Caco-2 (cell line): ENCODE measurements at regions of chr17 and their contacts with region 1.

Region 1: GRCh38 chr17:50139950-50140871 is 10.3 kb upstream of the SAMD14 start:
- DNase-seq: peak; percentile 89 to 93
- H3K4me3 ChIP-seq: no peak overlapping the region
- H3K4me3 Mint-ChIP-seq: no peak overlapping the region
- H3K27ac Mint-ChIP-seq: no peak overlapping the region
- H3K4me1 ChIP-seq: no peaks in the 10 kb centered on the region
- H3K4me1 Mint-ChIP-seq: peaks cover 4% of the 10 kb centered on the region
- H3K27me3 ChIP-seq: no peaks in the 10 kb centered on the region
- H3K27me3 Mint-ChIP-seq: no peaks in the 10 kb centered on the region
- CTCF ChIP-seq: peak; percentile 99 to 100

Region 2: GRCh38 chr17:50018909-50019308 is 121.3 kb before region 1 on chr17:
- CTCF ChIA-PET with region 1: no interaction called
- POLR2A ChIA-PET with region 1: no interaction called
- intact Hi-C with region 1: no loop called
- DNase-seq: no peak
- H3K4me3 ChIP-seq: no peak overlapping the region
- H3K4me3 Mint-ChIP-seq: no peak overlapping the region
- H3K27ac Mint-ChIP-seq: no peak overlapping the region
- H3K4me1 ChIP-seq: no peaks in the 10 kb centered on the region
- H3K4me1 Mint-ChIP-seq: no peaks in the 10 kb centered on the region
- H3K27me3 ChIP-seq: no peaks in the 10 kb centered on the region
- H3K27me3 Mint-ChIP-seq: no peaks in the 10 kb centered on the region
- CTCF ChIP-seq: no peak

Region 3: GRCh38 chr17:50161023-50161910 is 21.1 kb after region 1 on chr17:
- CTCF ChIA-PET with region 1: interaction called, 11 read pairs
- POLR2A ChIA-PET with region 1: no interaction called
- intact Hi-C with region 1: loop called (anchors 1 kb)
- DNase-seq: peak; percentile 96 to 100
- H3K4me3 ChIP-seq: peak overlapping the region; percentile 48
- H3K4me3 Mint-ChIP-seq: peak overlapping the region; percentile 67
- H3K27ac Mint-ChIP-seq: peak overlapping the region; percentile 2
- H3K4me1 ChIP-seq: peaks cover 17% of the 10 kb centered on the region
- H3K4me1 Mint-ChIP-seq: peaks cover 13% of the 10 kb centered on the region
- H3K27me3 ChIP-seq: no peaks in the 10 kb centered on the region
- H3K27me3 Mint-ChIP-seq: peaks cover 9% of the 10 kb centered on the region
- CTCF ChIP-seq: peak; percentile 99 to 100